ENCODE measurements at regions of chr13 and their contacts with region 1.

Region 1: GRCh38 chr13:81017513-81018152 is 676.7 kb upstream of the SPRY2 start:
- DNase-seq: peak; percentile 57
- H3K4me3 ChIP-seq: no peak overlapping the region
- H3K27ac ChIP-seq: no peak overlapping the region
- H3K4me1 ChIP-seq: peaks cover 2% of the 10 kb centered on the region
- H3K27me3 ChIP-seq: no peaks in the 10 kb centered on the region
- CTCF ChIP-seq: peak; percentile 19 to 29
- POLR2A ChIP-seq: no peak

Region 2: GRCh38 chr13:79548902-79549301 is 1468.7 kb before region 1 on chr13:
- CTCF ChIA-PET with region 1: interaction called, 14 read pairs
- POLR2A ChIA-PET with region 1: no interaction called
- dilution Hi-C with region 1: no loop called
- intact Hi-C with region 1: loop called (anchors 1 kb)
- DNase-seq: peak; percentile 50
- H3K4me3 ChIP-seq: no peak overlapping the region
- H3K27ac ChIP-seq: no peak overlapping the region
- H3K4me1 ChIP-seq: no peaks in the 10 kb centered on the region
- H3K27me3 ChIP-seq: no peaks in the 10 kb centered on the region
- CTCF ChIP-seq: no peak
- POLR2A ChIP-seq: no peak

Region 3: DNA sequence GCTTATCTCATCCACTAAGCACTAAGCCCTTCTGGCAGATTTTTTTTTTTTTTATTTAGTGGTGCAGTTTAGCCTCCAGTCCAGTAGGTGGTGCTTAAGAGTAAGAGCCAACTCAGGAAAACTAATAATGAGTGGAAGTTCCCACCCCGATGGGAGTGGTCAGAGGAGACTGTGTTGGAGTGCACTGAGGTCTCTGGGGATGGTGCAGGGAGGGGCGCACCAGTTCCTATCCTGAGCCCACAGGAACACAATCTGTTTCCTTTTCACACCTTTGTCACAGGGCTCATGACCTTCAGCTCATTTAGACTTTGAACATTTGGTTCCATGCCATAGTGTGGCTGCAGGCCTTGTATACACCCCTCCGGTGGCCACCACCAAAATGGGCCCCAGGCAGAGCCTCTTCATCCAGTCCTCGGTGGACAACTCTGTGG is 1044.1 kb before region 1 on chr13:
- CTCF ChIA-PET with region 1: no interaction called
- POLR2A ChIA-PET with region 1: no interaction called
- dilution Hi-C with region 1: no loop called
- intact Hi-C with region 1: loop called (anchors 10 kb)
- DNase-seq: no peak
- H3K4me3 ChIP-seq: no peak overlapping the region
- H3K27ac ChIP-seq: no peak overlapping the region
- H3K4me1 ChIP-seq: no peaks in the 10 kb centered on the region
- H3K27me3 ChIP-seq: no peaks in the 10 kb centered on the region
- CTCF ChIP-seq: peak; percentile 36
- POLR2A ChIP-seq: no peak

Region 4: GRCh38 chr13:80873589-80873988 is 144.0 kb before region 1 on chr13:
- CTCF ChIA-PET with region 1: interaction called, 10 read pairs
- POLR2A ChIA-PET with region 1: no interaction called
- dilution Hi-C with region 1: no loop called
- intact Hi-C with region 1: no loop called
- DNase-seq: no peak
- H3K4me3 ChIP-seq: no peak overlapping the region
- H3K27ac ChIP-seq: no peak overlapping the region
- H3K4me1 ChIP-seq: peaks cover 9% of the 10 kb centered on the region
- H3K27me3 ChIP-seq: no peaks in the 10 kb centered on the region
- CTCF ChIP-seq: no peak
- POLR2A ChIP-seq: no peak

Region 5: DNA sequence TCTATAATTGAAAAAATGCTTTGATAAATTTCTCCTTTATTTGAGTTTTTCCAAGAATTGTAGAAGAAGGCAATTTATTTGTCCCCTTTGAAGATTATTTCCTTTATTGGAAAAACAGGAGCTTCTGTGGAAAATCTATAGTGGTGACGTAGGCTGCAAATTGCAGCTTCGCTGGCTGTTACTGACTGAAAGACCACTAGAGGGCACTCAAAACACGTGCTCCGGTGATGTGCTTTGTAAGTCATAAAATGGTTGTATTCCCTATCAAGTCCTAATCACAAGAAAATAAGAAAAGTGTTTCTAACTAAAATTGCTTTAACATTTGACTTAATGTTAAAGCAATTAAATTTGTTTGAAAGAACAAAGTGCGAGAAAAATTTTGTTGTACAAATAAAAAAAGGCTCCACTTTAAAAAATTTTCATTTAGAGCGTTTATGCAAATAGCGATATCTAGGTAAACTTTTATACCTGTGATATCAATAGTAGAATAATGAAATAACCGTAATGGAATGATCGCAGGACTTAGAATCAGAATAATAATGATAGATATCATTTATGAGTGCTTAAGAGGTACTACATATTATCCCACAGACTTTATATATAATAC is 38.5 kb before region 1 on chr13:
- CTCF ChIA-PET with region 1: interaction called, 68 read pairs
- POLR2A ChIA-PET with region 1: no interaction called
- dilution Hi-C with region 1: no loop called
- intact Hi-C with region 1: loop called (anchors 1 kb)
- DNase-seq: peak; percentile 73
- H3K4me3 ChIP-seq: no peak overlapping the region
- H3K27ac ChIP-seq: no peak overlapping the region
- H3K4me1 ChIP-seq: no peaks in the 10 kb centered on the region
- H3K27me3 ChIP-seq: no peaks in the 10 kb centered on the region
- CTCF ChIP-seq: peak; percentile 78 to 86
- POLR2A ChIP-seq: no peak

Measured in endothelial cell of umbilical vein (primary cell).